ENCODE measurements at regions of chr1 and their contacts with region 1.

Region 1: DNA sequence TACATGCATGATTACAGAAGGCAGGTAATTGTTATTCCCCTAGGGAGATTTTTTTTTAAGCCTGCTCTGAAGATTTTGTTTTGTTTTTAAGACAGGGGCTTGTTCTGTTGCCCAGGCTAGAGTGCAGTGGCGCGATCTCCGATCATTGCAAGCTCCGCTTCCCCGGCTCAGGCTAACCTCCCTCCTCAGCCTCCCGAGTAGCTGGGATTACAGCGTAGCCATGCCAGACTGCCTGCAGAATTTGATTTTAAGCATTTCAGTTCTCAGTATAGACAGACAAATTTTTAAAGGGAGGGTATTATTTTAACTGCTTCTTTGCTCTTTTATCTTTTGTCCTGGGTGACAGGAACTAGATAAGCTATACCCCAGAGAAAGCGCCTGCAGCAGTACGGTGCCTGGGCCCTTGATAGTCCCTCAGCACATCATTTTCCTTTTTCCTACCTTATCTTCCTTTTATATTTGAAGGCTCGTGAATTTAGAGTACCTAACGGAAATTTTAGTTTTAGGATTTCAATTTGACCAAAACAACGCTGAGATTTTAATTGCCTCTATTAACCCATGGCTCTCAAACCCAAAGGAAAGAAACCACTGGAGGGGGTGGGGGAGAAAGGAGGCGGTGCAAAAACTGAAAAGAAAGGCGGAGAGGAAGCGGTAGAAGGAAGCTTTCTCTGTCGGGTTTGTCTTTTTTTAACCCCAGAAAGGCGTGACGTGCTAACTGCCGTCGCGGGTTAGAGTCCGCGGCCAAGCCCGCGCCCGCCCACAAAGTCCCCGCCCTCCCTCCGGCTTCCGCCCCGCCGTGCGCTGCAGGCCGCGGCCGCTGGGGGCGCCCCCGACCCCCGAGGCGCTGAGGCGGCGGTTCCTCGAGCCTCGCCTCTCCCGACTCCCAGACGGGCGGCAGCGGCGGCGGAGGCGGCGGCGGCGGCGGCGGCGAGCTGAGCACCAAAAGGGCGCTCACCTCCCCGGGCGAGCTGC is at the start of gene EEIG2:
- DNase-seq: peak; percentile 78 to 95 (median 88)
- ATAC-seq: peak; percentile 89 to 96 (median 92)
- H3K4me3 ChIP-seq: peak within 1 kb of the TSS; percentile 63 to 80
- H3K4me3 Mint-ChIP-seq: peak within 1 kb of the TSS in 2 of 3 donors; percentile 93 to 98
- H3K27ac ChIP-seq: peak within 1 kb of the TSS; percentile 74
- H3K27ac Mint-ChIP-seq: peak within 1 kb of the TSS; percentile 91
- H3K4me1 ChIP-seq: peaks cover 26 to 33% of the 10 kb centered on the region in 2 experiments
- H3K4me1 Mint-ChIP-seq: peaks cover 35 to 44% (median 40%) of the 10 kb centered on the region in 3 donors
- H3K27me3 ChIP-seq: no peaks in the 10 kb centered on the region
- H3K27me3 Mint-ChIP-seq: no peaks in the 10 kb centered on the region
- total RNA-seq, gene EEIG2: 6.7 to 16.2 (median 14.4) TPM

Region 2: DNA sequence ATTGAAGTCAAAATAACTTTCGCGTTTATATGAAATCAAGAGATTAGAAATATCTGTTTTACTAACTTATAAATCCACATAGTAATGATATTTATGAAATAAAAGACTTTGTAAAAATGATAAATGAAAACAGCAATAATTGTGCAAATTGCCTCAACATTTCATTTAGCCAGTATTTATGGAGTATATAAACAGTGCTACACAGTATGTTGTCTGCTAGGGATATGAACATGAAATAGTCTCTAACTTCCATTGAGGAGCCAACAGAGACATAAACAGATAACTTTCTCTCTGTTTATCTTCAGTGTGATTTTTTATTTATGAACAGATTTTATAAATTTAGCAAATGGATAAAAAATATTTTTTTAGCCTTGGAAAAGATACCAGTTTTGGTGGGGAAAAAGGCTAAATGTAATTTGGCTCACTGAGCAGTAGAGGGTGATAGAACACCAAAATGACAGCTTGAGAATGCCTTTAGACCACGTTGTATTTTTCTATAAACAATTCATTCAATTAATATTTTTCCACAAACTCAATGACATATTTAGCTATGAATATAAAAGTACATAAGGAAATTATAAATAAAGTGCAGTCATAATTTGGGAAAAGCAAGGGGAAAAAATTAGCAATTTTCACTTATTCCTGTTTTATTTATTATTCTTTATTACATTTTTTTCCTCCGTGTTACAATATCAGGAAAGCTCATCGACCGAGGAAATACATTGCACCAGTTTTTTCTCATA is 47.1 kb before region 1 on chr1:
- CTCF ChIA-PET with region 1: interaction called, 35 to 63 read pairs
- POLR2A ChIA-PET with region 1: interaction called in 1 of 2 experiments, 4 read pairs
- DNase-seq: peak in 1 of 35 experiments; percentile 75
- ATAC-seq: peak; percentile 45 to 72 (median 52)
- H3K4me3 ChIP-seq: no peak overlapping the region
- H3K4me3 Mint-ChIP-seq: no peak overlapping the region
- H3K27ac ChIP-seq: no peak overlapping the region
- H3K27ac Mint-ChIP-seq: no peak overlapping the region
- H3K4me1 ChIP-seq: no peaks in the 10 kb centered on the region
- H3K4me1 Mint-ChIP-seq: no peaks in the 10 kb centered on the region
- H3K27me3 ChIP-seq: no peaks in the 10 kb centered on the region
- H3K27me3 Mint-ChIP-seq: peaks cover 3 to 8% of the 10 kb centered on the region in 2 donors

Region 3: GRCh38 chr1:108643492-108644335 is 84.2 kb after region 1 on chr1:
- CTCF ChIA-PET with region 1: interaction called, 6 to 54 read pairs
- POLR2A ChIA-PET with region 1: interaction called, 3 to 12 read pairs
- DNase-seq: peak in 29 of 35 experiments; percentile 18 to 84 (median 47)
- ATAC-seq: peak; percentile 15 to 37 (median 28)
- H3K4me3 ChIP-seq: no peak overlapping the region
- H3K4me3 Mint-ChIP-seq: peak overlapping the region in 2 of 3 donors; percentile 5 to 58
- H3K27ac ChIP-seq: peak overlapping the region; percentile 97
- H3K27ac Mint-ChIP-seq: peak overlapping the region; percentile 99
- H3K4me1 ChIP-seq: peaks cover 45 to 62% of the 10 kb centered on the region in 2 experiments
- H3K4me1 Mint-ChIP-seq: peaks cover 76 to 78% (median 78%) of the 10 kb centered on the region in 3 donors
- H3K27me3 ChIP-seq: no peaks in the 10 kb centered on the region
- H3K27me3 Mint-ChIP-seq: no peaks in the 10 kb centered on the region

Region 4: GRCh38 chr1:108661030-108661620 is 101.6 kb after region 1 on chr1 and contains the start of gene HENMT1:
- CTCF ChIA-PET with region 1: interaction called, 6 to 16 read pairs
- POLR2A ChIA-PET with region 1: interaction called in 1 of 2 experiments, 6 read pairs
- DNase-seq: peak; percentile 70 to 93 (median 81)
- ATAC-seq: peak; percentile 89 to 91 (median 90)
- H3K4me3 ChIP-seq: peak within 1 kb of the TSS; percentile 58 to 62
- H3K4me3 Mint-ChIP-seq: peak within 1 kb of the TSS; percentile 80 to 85 (median 82)
- H3K27ac ChIP-seq: peak within 1 kb of the TSS; percentile 98
- H3K27ac Mint-ChIP-seq: peak within 1 kb of the TSS; percentile 94 to 95
- H3K4me1 ChIP-seq: peaks cover 8 to 17% of the 10 kb centered on the region in 2 experiments
- H3K4me1 Mint-ChIP-seq: peaks cover 35 to 48% (median 40%) of the 10 kb centered on the region in 3 donors
- H3K27me3 ChIP-seq: no peaks in the 10 kb centered on the region
- H3K27me3 Mint-ChIP-seq: no peaks in the 10 kb centered on the region
- total RNA-seq, gene HENMT1: 11.0 to 20.2 (median 16.0) TPM

Region 5: GRCh38 chr1:109075531-109076490 is 516.3 kb after region 1 on chr1 and contains the start of gene TAF13:
- CTCF ChIA-PET with region 1: no interaction called
- POLR2A ChIA-PET with region 1: interaction called in 1 of 2 experiments, 11 read pairs
- DNase-seq: peak; percentile 66 to 91 (median 81)
- ATAC-seq: peak; percentile 98 to 100 (median 98)
- H3K4me3 ChIP-seq: peak within 1 kb of the TSS; percentile 60 to 82
- H3K4me3 Mint-ChIP-seq: peak within 1 kb of the TSS; percentile 89 to 97 (median 94)
- H3K27ac ChIP-seq: peak within 1 kb of the TSS; percentile 97
- H3K27ac Mint-ChIP-seq: peak within 1 kb of the TSS; percentile 96
- H3K4me1 ChIP-seq: peaks cover 3 to 7% of the 10 kb centered on the region in 2 experiments
- H3K4me1 Mint-ChIP-seq: peaks cover 22 to 24% (median 24%) of the 10 kb centered on the region in 3 donors
- H3K27me3 ChIP-seq: no peaks in the 10 kb centered on the region
- H3K27me3 Mint-ChIP-seq: no peaks in the 10 kb centered on the region
- total RNA-seq, gene TAF13: 8.7 to 19.4 (median 9.7) TPM

Measured in T-cell (primary cell).